IMR-90 (cell line): ENCODE measurements at regions of chr9 and their contacts with region 1.

Region 1: GRCh38 chr9:125374443-125375309 is 113.0 kb downstream of the GAPVD1 start:
- DNase-seq: peak; percentile 73
- ATAC-seq: peak; percentile 98
- H3K4me3 ChIP-seq: peak overlapping the region; percentile 24
- H3K27ac ChIP-seq: no peak overlapping the region
- H3K4me1 ChIP-seq: no peaks in the 10 kb centered on the region
- H3K27me3 ChIP-seq: peaks cover 17% of the 10 kb centered on the region; the same call in 1 of the 2 replicates
- CTCF ChIP-seq: peak; percentile 92
- POLR2A ChIP-seq: 0 out of 2 replicates have a peak, but pooled peaks have one; percentile 36
- RAD21 ChIP-seq: peak; percentile 96

Region 2: GRCh38 chr9:124771021-124771866 is 603.4 kb before region 1 on chr9 and contains the start of gene NR6A1:
- CTCF ChIA-PET with region 1: no interaction called
- POLR2A ChIA-PET with region 1: no interaction called
- dilution Hi-C with region 1: no loop called
- in situ Hi-C with region 1: loop called (anchors 5 kb)
- intact Hi-C with region 1: loop called (anchors 1 kb)
- DNase-seq: peak; percentile 95
- ATAC-seq: peak; percentile 93
- H3K4me3 ChIP-seq: peak within 1 kb of the TSS; percentile 58
- H3K27ac ChIP-seq: peak within 1 kb of the TSS; percentile 16
- H3K4me1 ChIP-seq: peaks cover 2% of the 10 kb centered on the region; the same call in 1 of the 2 replicates
- H3K27me3 ChIP-seq: peaks cover 40% of the 10 kb centered on the region
- CTCF ChIP-seq: no peak; the same call in 1 of the 2 replicates
- POLR2A ChIP-seq: no peak
- RAD21 ChIP-seq: no peak
- total RNA-seq, gene NR6A1: 0.28 and 0.36 TPM in 2 replicates

Region 3: DNA sequence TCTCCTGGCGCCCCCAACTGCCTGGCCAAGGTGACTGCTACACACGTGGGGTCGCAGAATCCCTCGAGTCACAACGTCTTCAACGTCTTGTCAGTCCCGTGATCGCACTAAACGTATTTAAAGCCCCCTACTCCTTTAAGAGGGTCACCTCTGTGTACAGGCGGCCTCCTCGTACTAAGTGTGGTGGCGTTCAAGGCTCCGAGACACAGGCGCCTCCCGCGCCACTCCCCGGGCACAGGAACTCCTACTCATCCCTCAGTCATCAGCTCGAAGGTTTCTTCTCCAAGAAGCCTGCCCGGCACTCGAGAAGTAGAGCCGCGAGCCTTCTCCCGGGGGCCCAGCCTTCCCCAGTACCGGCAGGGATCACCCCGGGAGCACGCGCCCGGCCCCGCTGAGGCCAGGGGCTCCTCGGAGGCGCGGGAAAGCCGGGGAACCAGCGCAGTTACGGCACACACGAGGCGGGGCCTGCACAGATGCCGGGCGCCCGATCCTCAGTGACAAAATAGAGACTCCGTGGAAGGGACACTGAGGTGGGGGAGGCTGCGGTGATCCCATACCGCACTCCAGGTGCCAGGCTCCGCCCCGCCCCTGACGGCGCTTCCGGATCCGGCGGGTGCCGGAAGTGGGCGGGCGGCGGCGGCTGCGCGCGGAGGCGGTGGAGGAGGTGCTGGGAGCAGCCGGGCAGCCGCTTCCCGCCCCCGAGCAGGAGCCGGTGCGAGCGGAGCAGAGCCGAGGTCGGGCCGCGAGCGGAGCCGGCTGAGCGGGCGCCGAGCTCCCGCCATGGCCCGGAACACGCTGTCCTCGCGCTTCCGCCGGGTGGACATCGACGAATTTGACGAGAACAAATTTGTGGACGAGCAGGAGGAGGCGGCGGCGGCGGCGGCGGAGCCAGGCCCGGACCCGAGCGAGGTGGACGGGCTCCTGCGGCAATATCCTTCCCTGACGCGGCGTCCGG is 505.9 kb before region 1 on chr9:
- CTCF ChIA-PET with region 1: no interaction called
- POLR2A ChIA-PET with region 1: no interaction called
- dilution Hi-C with region 1: no loop called
- in situ Hi-C with region 1: no loop called
- intact Hi-C with region 1: loop called (anchors 5 kb)
- DNase-seq: peak; percentile 71
- ATAC-seq: peak; percentile 84
- H3K4me3 ChIP-seq: peak overlapping the region; percentile 69
- H3K27ac ChIP-seq: peak overlapping the region; percentile 94
- H3K4me1 ChIP-seq: peaks cover 22% of the 10 kb centered on the region
- H3K27me3 ChIP-seq: no peaks in the 10 kb centered on the region
- CTCF ChIP-seq: peak; percentile 31; the same call in 1 of the 2 replicates
- POLR2A ChIP-seq: peak; percentile 90
- RAD21 ChIP-seq: no peak

Region 4: GRCh38 chr9:124906966-124907365 is 467.7 kb before region 1 on chr9:
- CTCF ChIA-PET with region 1: no interaction called
- POLR2A ChIA-PET with region 1: no interaction called
- dilution Hi-C with region 1: no loop called
- in situ Hi-C with region 1: loop called (anchors 25 kb)
- intact Hi-C with region 1: no loop called
- DNase-seq: no peak
- ATAC-seq: no peak
- H3K4me3 ChIP-seq: no peak overlapping the region
- H3K27ac ChIP-seq: no peak overlapping the region
- H3K4me1 ChIP-seq: no peaks in the 10 kb centered on the region
- H3K27me3 ChIP-seq: no peaks in the 10 kb centered on the region
- CTCF ChIP-seq: no peak
- POLR2A ChIP-seq: no peak
- RAD21 ChIP-seq: no peak

Region 5: GRCh38 chr9:125255781-125256391 is 118.8 kb before region 1 on chr9:
- CTCF ChIA-PET with region 1: no interaction called
- POLR2A ChIA-PET with region 1: no interaction called
- dilution Hi-C with region 1: no loop called
- in situ Hi-C with region 1: no loop called
- intact Hi-C with region 1: loop called (anchors 2 kb)
- DNase-seq: no peak
- ATAC-seq: peak; percentile 59; the same call in 1 of the 2 replicates
- H3K4me3 ChIP-seq: no peak overlapping the region
- H3K27ac ChIP-seq: no peak overlapping the region
- H3K4me1 ChIP-seq: no peaks in the 10 kb centered on the region
- H3K27me3 ChIP-seq: no peaks in the 10 kb centered on the region
- CTCF ChIP-seq: peak; percentile 48
- POLR2A ChIP-seq: no peak
- RAD21 ChIP-seq: peak; percentile 60